Esophagus squamous epithelium (tissue), 5 donors: ENCODE measurements at regions of chr3 and their contacts with region 1.

Region 1: DNA sequence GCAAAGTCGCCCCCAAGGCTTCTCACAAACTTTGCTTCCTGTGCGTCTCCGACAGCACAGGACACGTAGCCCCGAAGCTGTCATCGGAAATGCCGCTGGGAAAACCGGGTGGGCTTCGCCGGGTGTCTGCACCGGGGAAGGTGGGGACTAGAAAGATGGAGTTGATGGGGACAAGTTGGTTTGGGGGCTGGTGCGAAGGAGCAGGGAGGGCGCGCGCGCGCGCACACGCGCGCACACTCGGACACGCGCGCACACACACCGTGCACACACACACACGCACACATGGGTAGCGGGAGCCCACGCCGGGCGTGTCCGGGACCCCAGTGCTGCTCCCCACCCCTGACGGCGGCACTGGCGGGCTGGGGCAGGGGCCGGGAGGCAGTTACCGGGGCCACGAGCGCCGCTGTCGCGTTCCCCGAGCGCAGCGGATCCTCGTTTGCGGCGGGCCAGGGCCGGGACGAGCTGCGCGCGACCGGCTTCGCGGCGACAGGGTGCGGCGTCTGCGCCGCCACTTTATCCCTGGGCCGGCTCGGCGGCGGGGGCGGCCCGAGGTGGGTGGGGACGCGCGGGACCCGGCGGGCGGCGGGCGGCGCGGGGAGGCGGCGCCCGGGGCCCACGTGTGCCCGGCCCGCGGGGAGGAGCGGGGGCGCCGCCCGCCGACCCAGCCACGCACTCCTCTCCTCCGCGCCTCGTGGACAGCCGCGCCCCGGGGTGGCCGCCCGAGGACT is 547 bp upstream of the MGLL start:
- DNase-seq: no peak
- H3K4me3 ChIP-seq: peak overlapping the region; percentile 80 to 94 (median 85)
- H3K27ac ChIP-seq: peak overlapping the region; percentile 89 to 95 (median 94)
- H3K4me1 ChIP-seq: peaks cover 30 to 55% (median 37%) of the 10 kb centered on the region in 3 donors
- H3K27me3 ChIP-seq: peaks cover 0 to 5% (median 0%) of the 10 kb centered on the region in 4 donors
- CTCF ChIP-seq: peak in 1 of 6 experiments; percentile 14
- POLR2A ChIP-seq: peak in 2 of 4 donors; percentile 36 to 48

Region 2: DNA sequence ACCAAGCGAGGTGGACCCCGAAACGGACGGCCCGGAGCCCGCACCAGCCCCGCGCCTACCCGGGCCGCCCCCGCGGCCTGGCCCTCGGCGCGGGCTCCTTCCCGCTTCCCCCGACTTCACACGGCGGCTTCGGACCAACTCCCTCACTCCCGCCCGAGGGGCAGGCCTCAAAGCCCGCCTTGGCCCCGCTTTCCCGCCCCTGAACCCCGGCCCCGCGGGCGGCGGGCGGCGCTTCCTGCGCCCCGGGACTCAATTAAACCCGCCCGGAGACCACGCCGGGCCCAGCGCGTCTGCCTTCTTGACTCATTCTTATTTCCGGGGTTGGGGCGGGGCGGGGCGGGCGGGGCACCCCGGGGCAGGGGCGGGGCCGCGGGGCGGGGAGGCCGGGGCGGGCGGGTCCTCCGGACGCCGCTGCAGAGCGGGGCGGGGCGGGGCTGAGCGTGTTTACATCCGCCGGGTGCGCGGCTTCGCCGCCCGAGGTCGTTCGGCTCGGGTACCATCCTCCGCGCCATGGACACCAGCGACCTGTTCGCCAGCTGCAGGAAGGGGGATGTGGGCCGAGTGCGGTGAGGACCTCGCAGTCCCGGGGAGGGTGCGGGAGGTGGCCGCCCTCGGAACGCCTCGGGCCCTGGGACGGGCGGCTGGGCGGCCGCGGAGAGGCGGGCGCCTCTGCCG is 150.2 kb before region 1 on chr3 and contains the start of gene ABTB1:
- intact Hi-C with region 1: loop called (anchors 10 kb)
- DNase-seq: peak; percentile 53
- H3K4me3 ChIP-seq: peak within 1 kb of the TSS; percentile 73 to 98 (median 88)
- H3K27ac ChIP-seq: peak within 1 kb of the TSS; percentile 86 to 96 (median 94)
- H3K4me1 ChIP-seq: peaks cover 22 to 56% (median 24%) of the 10 kb centered on the region in 3 donors
- H3K27me3 ChIP-seq: no peaks in the 10 kb centered on the region
- CTCF ChIP-seq: no peak
- POLR2A ChIP-seq: peak in 3 of 4 donors; percentile 45 to 83 (median 81)
- total RNA-seq, gene ABTB1: 5.6 to 21.4 (median 6.3) TPM

Region 3: DNA sequence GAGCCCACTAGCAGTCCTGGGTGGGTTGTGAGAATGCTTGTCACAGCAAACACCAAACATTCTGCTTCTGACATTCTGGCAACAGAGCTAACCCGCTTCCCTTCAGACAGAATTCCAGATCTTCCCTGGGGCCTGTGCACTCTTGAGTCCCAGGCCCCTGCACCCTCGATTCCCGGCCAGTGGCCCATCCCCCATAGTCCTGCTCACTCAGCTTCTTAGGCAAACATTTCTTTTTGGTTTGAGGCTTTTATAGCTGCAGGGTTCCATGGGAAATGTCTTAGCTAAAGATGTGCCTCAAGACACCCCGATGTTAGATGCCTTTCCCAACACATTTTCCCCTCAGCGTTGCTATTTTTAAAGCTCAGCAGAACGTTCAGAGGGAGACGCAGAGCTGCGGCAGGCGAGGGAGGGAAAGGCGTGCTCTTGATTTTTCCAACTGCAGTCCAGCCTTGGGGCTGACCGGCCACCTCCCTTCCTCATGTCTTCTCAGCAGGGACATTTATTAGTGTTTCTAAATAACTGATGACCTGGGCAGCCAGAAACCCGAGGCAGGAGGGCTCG is 114.9 kb before region 1 on chr3:
- intact Hi-C with region 1: loop called (anchors 10 kb)
- DNase-seq: no peak
- H3K4me3 ChIP-seq: no peak overlapping the region
- H3K27ac ChIP-seq: peak overlapping the region; percentile 15 to 64 (median 50)
- H3K4me1 ChIP-seq: peaks cover 0 to 38% (median 17%) of the 10 kb centered on the region in 3 donors
- H3K27me3 ChIP-seq: no peaks in the 10 kb centered on the region
- CTCF ChIP-seq: no peak
- POLR2A ChIP-seq: no peak